RWPE1 (cell line): ENCODE measurements at regions of chr16 and their contacts with region 1.

Region 1: GRCh38 chr16:11797166-11797956 is at the start of gene ZC3H7A:
- DNase-seq: peak; percentile 96
- H3K27ac ChIP-seq: peak within 1 kb of the TSS; percentile 95
- CTCF ChIP-seq: peak; percentile 97

Region 2: DNA sequence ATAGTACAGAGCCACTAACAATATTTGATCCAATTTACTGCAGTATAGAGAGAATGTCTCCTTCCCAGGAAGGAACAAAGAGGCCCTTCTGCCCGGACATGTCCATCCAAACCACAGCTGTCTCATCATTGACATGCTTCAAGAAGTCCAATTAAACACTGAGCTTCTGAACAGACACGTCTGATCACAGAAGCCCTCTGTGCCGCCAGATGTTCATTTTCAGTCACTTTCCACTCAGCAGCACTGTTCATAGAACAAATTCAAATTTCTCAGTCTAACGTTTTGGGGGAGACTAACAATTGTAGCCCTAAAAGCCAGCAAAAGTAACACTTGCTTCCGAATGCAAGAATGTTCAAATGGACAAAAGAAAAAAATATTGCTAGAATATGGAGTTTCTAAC is 15.6 kb before region 1 on chr16:
- CTCF ChIA-PET with region 1: interaction called, 11 read pairs
- POLR2A ChIA-PET with region 1: interaction called, 4 read pairs
- DNase-seq: peak; percentile 70
- H3K27ac ChIP-seq: peak overlapping the region; percentile 97
- CTCF ChIP-seq: no peak